Mammary epithelial cell (primary cell): ENCODE measurements at regions of chr13 and their contacts with region 1.

Region 1: DNA sequence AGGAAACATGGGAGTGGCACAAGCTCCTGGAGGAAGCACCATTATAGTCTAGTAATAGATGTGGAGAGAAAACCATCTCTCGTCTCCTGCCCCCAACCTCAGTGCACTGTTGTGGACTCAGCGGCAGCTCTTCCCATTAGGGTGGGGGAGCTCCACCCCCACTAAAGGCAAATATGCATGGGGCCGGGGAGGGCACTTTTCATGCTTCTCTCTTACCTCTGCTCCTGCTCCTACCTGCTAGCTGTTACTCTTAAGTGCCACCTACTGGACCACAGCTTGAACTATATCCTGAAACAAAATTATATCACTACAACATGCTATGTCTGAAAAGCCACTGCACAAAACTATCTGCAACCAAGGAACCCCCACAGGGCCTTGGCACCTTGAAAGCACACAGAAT is 112.6 kb upstream of the DACH1 start:
- DNase-seq: peak; percentile 12
- H3K4me3 ChIP-seq: no peak overlapping the region
- H3K27ac ChIP-seq: no peak overlapping the region
- H3K4me1 ChIP-seq: no peaks in the 10 kb centered on the region
- H3K27me3 ChIP-seq: no peaks in the 10 kb centered on the region
- CTCF ChIP-seq: peak; percentile 40 to 72

Region 2: DNA sequence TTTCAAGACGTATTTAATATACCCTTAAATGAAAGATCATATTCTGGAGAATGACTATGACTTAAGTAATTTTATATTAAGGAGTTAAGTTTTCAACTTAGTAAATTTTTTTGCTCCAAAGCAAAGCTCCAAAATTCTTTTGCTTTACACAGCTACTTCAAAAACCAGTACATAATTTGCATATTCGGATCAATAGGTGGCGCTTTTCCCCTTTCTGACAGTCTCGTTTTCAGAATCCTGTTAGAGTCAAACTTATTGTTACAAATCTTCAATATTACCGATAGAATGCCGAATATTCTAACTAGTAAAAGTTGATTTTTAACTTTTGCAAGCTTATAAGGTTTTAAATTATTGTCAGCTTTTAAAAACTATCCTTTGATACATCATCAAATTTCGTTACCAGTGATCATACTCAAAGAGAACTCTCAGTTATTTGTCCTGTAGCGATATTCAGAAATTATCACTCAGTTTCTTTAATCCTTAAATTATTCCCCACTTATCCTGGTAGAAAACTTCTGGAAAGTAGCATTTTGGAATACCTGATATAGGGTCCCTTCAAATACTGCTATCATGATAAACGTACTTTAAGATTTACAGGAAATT is 1018.7 kb before region 1 on chr13:
- CTCF ChIA-PET with region 1: no interaction called
- dilution Hi-C with region 1: no loop called
- in situ Hi-C with region 1: no loop called
- intact Hi-C with region 1: loop called (anchors 5 kb)
- DNase-seq: peak; percentile 5
- H3K4me3 ChIP-seq: no peak overlapping the region
- H3K27ac ChIP-seq: no peak overlapping the region
- H3K4me1 ChIP-seq: no peaks in the 10 kb centered on the region
- H3K27me3 ChIP-seq: no peaks in the 10 kb centered on the region
- CTCF ChIP-seq: peak; percentile 41 to 69

Region 3: DNA sequence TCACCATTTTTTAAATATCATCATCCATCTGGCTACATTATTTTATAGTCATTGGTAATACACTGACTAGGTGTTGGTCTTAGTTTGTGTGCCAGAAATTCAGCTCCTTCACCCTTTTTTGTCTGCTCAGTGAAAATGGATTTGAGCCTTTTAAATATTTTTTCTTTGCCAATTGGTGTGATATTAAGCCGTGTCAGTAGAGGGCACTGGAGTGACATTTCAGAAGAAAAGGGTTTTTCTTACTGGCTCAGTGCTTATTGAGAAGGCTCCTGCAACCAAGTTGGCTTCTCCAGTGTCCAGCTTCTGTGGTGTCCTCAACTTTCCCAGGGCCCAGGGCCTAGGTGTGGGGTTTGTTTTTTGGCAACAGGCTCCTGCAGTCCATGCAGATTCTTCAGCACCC is 659.2 kb before region 1 on chr13:
- CTCF ChIA-PET with region 1: no interaction called
- dilution Hi-C with region 1: no loop called
- in situ Hi-C with region 1: loop called in 1 of 2 experiments (anchors 25 kb)
- intact Hi-C with region 1: loop called (anchors 1 kb)
- DNase-seq: peak; percentile 7
- H3K4me3 ChIP-seq: no peak overlapping the region
- H3K27ac ChIP-seq: no peak overlapping the region
- H3K4me1 ChIP-seq: no peaks in the 10 kb centered on the region
- H3K27me3 ChIP-seq: peaks cover 3% of the 10 kb centered on the region
- CTCF ChIP-seq: peak; percentile 64 to 66

Region 4: DNA sequence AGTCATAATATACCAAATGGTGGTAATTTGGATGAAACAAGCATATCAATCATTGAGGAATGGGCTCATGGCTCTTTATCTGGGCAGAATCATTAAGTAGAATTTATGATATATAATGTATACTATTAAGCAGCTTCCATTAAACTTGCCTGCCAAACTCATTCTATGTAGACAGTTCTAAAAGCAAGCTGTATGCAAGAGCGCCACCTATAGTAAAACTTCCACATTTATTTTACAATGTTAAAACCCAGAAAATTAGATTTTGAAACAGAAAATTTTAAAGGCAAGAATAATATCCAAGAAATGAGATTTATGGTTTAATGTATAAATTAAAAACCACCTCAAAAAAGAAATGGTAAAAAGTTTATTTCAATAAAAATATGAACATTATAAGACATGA is 586.3 kb after region 1 on chr13:
- CTCF ChIA-PET with region 1: no interaction called
- dilution Hi-C with region 1: no loop called
- in situ Hi-C with region 1: no loop called
- intact Hi-C with region 1: loop called (anchors 2 kb)
- DNase-seq: no peak
- H3K4me3 ChIP-seq: no peak overlapping the region
- H3K27ac ChIP-seq: no peak overlapping the region
- H3K4me1 ChIP-seq: no peaks in the 10 kb centered on the region
- H3K27me3 ChIP-seq: no peaks in the 10 kb centered on the region
- CTCF ChIP-seq: peak; percentile 77 to 79